Thyroid gland (tissue), 4 donors: ENCODE measurements at regions of chr13 and their contacts with region 1.

Region 1: DNA sequence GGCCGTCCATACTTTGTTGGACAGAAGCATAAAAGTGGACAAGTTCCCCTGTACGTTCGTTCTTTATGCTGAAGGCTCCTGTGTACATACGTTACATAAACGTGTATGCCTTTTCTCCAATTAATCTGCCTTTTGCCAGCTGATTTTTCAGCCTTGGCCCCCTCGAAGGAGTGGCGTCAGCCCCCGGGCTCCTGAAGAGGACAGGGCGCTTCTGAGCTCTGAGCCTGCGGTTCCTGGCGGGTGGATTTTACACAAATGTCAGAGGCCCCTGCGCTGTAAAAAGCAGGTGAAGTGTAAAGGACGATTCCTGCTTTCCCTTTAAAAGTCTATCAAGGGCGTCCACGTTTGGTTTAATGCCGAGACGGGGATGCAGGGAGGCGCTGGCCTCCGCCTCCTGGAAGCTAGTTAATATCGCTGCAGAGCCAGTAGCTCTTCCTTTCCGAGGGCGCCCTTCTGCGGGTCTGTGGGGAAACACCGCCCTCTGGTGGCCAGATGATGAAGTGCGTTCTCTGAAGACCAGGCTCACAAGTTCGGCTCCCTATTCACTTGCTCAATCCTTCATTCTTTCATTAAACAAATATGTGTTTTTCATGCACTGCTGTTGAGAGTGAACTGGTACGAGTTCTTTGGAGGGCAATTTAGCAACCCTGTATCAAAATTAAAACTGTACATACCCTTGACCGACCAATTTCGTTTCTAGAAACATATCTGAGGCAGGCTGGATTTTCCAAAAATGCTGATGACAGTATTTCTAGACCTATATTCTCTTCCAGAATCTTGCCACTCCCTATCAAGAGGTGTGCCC is 62.0 kb downstream of the GPR12 start:
- DNase-seq: peak; percentile 77 to 83
- H3K4me3 ChIP-seq: no peak overlapping the region
- H3K27ac ChIP-seq: no peak overlapping the region
- H3K4me1 ChIP-seq: no peaks in the 10 kb centered on the region
- H3K27me3 ChIP-seq: no peaks in the 10 kb centered on the region
- CTCF ChIP-seq: peak; percentile 94 to 97 (median 96)
- POLR2A ChIP-seq: no peak

Region 2: DNA sequence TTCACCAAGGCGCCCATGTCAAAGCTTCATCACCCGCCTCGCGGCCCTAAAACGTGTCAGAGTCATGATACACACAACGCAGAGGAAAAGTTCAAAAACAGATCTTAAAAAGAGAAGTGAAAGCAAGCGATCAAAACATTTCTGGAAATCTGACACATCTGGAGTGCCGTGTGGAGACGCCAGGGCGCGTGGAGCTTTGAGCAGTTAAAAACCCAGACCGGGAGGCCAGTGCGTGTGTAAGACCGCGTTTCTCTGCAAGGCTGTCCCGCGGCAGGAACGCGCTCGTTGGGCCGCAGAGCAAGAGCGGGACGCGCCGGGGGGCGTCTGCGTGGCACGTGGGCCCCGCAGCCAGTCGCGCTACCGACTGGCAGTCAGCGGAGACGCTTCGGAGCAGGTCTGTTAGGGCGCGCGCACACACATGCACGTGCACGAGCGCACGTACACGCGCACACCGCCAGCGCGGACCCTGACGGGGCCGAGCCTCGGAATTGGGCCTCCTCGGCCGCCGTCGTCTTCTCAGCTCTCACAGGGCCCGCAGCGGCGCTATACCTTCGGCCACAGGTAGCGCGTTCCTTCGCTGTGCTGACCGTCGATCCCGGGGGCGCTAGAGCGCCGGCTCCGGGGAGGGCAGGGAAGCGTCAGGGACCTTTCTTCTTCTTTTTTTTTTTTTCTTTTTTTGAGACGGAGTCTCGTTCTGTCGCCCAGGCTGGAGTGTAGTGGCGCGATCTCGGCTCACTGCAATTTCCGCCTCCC is 512.3 kb before region 1 on chr13:
- intact Hi-C with region 1: loop called (anchors 5 kb)
- DNase-seq: peak; percentile 81 to 85
- H3K4me3 ChIP-seq: peak overlapping the region; percentile 4 to 84 (median 52)
- H3K27ac ChIP-seq: peak overlapping the region; percentile 1 to 72 (median 51)
- H3K4me1 ChIP-seq: peaks cover 0 to 7% of the 10 kb centered on the region in 2 donors
- H3K27me3 ChIP-seq: no peaks in the 10 kb centered on the region
- CTCF ChIP-seq: peak in 4 of 6 experiments; percentile 40 to 53 (median 44)
- POLR2A ChIP-seq: peak in 1 of 2 donors; percentile 53

Region 3: GRCh38 chr13:26485786-26486185 is 212.8 kb before region 1 on chr13:
- intact Hi-C with region 1: loop called (anchors 2 kb)
- DNase-seq: no peak
- H3K4me3 ChIP-seq: no peak overlapping the region
- H3K27ac ChIP-seq: no peak overlapping the region
- H3K4me1 ChIP-seq: no peaks in the 10 kb centered on the region
- H3K27me3 ChIP-seq: no peaks in the 10 kb centered on the region
- CTCF ChIP-seq: no peak
- POLR2A ChIP-seq: no peak

Region 4: GRCh38 chr13:26656919-26657318 is 41.7 kb before region 1 on chr13:
- intact Hi-C with region 1: no loop called
- DNase-seq: peak; percentile 58 to 60
- H3K4me3 ChIP-seq: no peak overlapping the region
- H3K27ac ChIP-seq: peak overlapping the region in 2 of 3 donors; percentile 22 to 27
- H3K4me1 ChIP-seq: peaks cover 16 to 27% of the 10 kb centered on the region in 2 donors
- H3K27me3 ChIP-seq: no peaks in the 10 kb centered on the region
- CTCF ChIP-seq: peak in 3 of 6 experiments; percentile 41 to 45 (median 44)
- POLR2A ChIP-seq: no peak

Region 5: DNA sequence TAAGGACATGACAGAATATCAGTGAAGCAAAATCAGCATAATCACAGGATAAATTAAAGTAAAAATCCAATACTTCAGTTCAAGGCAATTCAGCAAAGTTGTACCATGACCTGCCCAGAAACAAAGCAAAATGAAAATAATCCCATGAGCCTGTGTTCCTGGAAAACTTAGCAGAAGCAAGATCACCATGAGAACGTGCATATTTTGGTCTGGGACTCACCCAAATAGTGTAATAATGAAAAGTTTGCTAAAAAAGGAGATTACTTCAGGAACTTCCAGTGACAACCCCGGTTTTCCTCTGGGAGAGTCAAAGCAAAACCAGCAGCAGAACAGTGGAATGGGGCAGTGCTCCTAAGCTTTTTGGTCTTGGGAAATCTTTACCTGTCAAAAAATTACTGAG is 537.9 kb after region 1 on chr13:
- intact Hi-C with region 1: no loop called
- DNase-seq: no peak
- H3K4me3 ChIP-seq: no peak overlapping the region
- H3K27ac ChIP-seq: no peak overlapping the region
- H3K4me1 ChIP-seq: no peaks in the 10 kb centered on the region
- H3K27me3 ChIP-seq: no peaks in the 10 kb centered on the region
- CTCF ChIP-seq: no peak
- POLR2A ChIP-seq: no peak